PC-9 (cell line): ENCODE measurements at regions of chr10 and their contacts with region 1.

Region 1: GRCh38 chr10:35781643-35782035 is 139.5 kb upstream of the FZD8 start:
- DNase-seq: no peak
- H3K4me3 ChIP-seq: no peak overlapping the region
- H3K27ac ChIP-seq: no peak overlapping the region
- H3K4me1 ChIP-seq: no peaks in the 10 kb centered on the region
- H3K27me3 ChIP-seq: peaks cover 4% of the 10 kb centered on the region; the same call in 1 of the 2 replicates
- CTCF ChIP-seq: no peak

Region 2: GRCh38 chr10:35251373-35252100 is 530.1 kb before region 1 on chr10:
- CTCF ChIA-PET with region 1: no interaction called
- POLR2A ChIA-PET with region 1: no interaction called
- intact Hi-C with region 1: loop called (anchors 10 kb)
- DNase-seq: no peak
- H3K4me3 ChIP-seq: no peak overlapping the region
- H3K27ac ChIP-seq: no peak overlapping the region
- H3K4me1 ChIP-seq: no peaks in the 10 kb centered on the region
- H3K27me3 ChIP-seq: no peaks in the 10 kb centered on the region
- CTCF ChIP-seq: no peak